Activated CD4-positive, alpha-beta memory T cell treated with anti-CD3 and anti-CD28 coated beads, Interleukin-2, amount 10 ng/mL, durations not matched to agents 7 days and 5 days (primary cell): ENCODE measurements at regions of chr1 and their contacts with region 1.

Region 1: GRCh38 chr1:110554871-110555801 is 36.2 kb upstream of the KCNA10 start:
- DNase-seq: peak; percentile 54
- H3K4me3 Mint-ChIP-seq: no peak overlapping the region
- H3K27ac Mint-ChIP-seq: no peak overlapping the region
- H3K4me1 Mint-ChIP-seq: peaks cover 12% of the 10 kb centered on the region
- H3K27me3 Mint-ChIP-seq: peaks cover 62% of the 10 kb centered on the region

Region 2: DNA sequence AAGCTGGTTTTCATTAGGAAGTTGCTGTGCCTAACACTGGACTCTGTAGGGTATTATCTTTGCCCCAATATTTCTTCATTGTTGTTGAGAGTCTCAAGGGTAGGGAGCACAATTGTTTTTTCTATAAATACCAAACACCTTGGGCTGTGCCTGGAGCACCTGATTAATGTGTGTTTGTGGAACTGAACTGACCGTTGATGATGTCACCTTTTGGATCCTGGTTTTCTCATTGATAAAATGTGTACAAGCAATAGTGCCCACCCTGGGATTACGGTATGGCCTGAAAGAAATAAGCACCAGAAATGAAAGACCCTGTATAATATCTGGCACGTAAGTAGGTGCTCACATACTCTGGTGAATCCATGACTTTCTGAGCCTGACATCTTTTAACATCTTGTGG is 11.7 kb after region 1 on chr1:
- CTCF ChIA-PET with region 1: interaction called, 17 read pairs
- POLR2A ChIA-PET with region 1: no interaction called
- DNase-seq: no peak
- H3K4me3 Mint-ChIP-seq: no peak overlapping the region
- H3K27ac Mint-ChIP-seq: no peak overlapping the region
- H3K4me1 Mint-ChIP-seq: no peaks in the 10 kb centered on the region
- H3K27me3 Mint-ChIP-seq: peaks cover 40% of the 10 kb centered on the region

Region 3: GRCh38 chr1:110572751-110573150 is 17.6 kb after region 1 on chr1:
- CTCF ChIA-PET with region 1: interaction called, 17 read pairs
- POLR2A ChIA-PET with region 1: no interaction called
- DNase-seq: no peak
- H3K4me3 Mint-ChIP-seq: no peak overlapping the region
- H3K27ac Mint-ChIP-seq: no peak overlapping the region
- H3K4me1 Mint-ChIP-seq: no peaks in the 10 kb centered on the region
- H3K27me3 Mint-ChIP-seq: peaks cover 48% of the 10 kb centered on the region

Region 4: DNA sequence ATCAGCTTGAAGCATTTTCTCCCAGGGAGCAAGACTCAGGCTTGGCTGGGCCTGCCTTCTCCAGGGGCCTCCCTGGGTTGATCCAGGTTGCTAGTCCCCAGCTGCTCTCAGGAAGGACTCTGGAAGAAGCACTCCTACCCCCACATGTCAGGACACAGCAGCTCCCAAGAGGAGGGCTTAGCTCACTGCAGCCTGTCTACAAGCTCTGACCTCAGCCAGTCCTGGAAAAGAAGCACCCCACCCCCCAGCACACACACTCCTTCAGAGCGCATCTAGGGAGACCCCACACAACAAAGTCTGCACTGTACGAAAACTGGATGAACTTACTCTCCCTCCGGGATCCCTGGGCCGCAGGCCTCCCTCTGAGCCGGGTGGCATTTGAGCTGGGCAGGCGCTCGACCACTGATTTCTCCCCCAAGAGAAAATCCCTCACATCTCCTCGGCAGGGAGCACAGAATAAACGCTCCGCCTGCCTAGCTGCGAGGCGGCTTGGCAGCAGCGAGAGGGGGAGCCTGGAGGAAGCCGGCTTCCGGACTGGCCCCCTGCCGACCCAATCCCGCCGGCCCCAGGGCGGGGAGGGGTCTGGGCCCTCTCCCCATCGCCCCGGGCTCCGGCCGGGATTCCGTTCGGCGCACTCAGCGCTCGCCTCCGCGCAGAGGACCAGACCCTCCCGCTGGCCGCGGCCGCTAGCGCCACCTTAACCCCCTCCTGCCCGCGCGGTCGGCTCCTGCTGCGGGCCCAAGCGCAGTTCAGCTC is 50.9 kb after region 1 on chr1 and contains the start of gene KCNA2:
- CTCF ChIA-PET with region 1: interaction called, 23 read pairs
- POLR2A ChIA-PET with region 1: no interaction called
- DNase-seq: peak; percentile 15
- H3K4me3 Mint-ChIP-seq: peak within 1 kb of the TSS; percentile 68
- H3K27ac Mint-ChIP-seq: no peak within 1 kb of the TSS
- H3K4me1 Mint-ChIP-seq: peaks cover 41% of the 10 kb centered on the region
- H3K27me3 Mint-ChIP-seq: peaks cover 43% of the 10 kb centered on the region
- total RNA-seq, gene KCNA2: 5.9 to 6.6 TPM

Region 5: DNA sequence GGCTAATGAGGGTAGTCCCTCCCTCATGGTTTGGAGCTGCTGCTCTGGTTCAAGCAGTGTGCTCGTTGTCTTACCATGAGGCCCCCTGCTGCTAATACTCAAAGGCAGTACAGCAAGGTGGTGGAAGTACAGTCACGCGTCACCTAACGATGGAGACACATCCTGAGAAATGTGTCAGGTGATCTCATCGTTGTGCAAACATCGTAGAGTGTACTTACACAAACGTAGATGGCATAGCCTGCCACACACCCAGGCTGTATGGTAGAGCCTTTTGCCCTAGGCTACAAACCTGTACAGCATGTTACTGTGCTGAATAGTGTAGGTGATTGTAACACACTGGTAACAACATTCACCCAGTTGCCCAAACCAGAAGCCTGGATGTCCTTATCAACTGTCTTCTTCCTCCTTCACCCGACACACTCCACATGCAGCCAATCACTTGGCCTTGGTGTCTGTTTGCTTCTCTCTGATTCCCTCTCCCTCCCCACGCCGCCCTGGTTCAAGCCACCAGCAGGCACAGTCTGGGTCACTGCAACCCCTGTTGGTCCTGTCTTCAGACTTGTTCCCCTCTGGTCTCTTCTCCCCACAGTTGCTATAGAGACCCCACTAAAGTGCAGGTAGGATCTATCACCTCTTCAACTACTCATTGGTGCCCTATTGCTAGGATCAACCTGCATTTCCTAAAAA is 57.1 kb after region 1 on chr1:
- CTCF ChIA-PET with region 1: interaction called, 23 read pairs
- POLR2A ChIA-PET with region 1: interaction called, 3 read pairs
- DNase-seq: peak; percentile 11
- H3K4me3 Mint-ChIP-seq: no peak overlapping the region
- H3K27ac Mint-ChIP-seq: no peak overlapping the region
- H3K4me1 Mint-ChIP-seq: peaks cover 58% of the 10 kb centered on the region
- H3K27me3 Mint-ChIP-seq: peaks cover 22% of the 10 kb centered on the region

Region 6: GRCh38 chr1:110663241-110663640 is 108.1 kb after region 1 on chr1:
- CTCF ChIA-PET with region 1: no interaction called
- POLR2A ChIA-PET with region 1: no interaction called
- DNase-seq: no peak
- H3K4me3 Mint-ChIP-seq: no peak overlapping the region
- H3K27ac Mint-ChIP-seq: no peak overlapping the region
- H3K4me1 Mint-ChIP-seq: peaks cover 29% of the 10 kb centered on the region
- H3K27me3 Mint-ChIP-seq: no peaks in the 10 kb centered on the region

Region 7: GRCh38 chr1:110798691-110799256 is 243.6 kb after region 1 on chr1:
- CTCF ChIA-PET with region 1: no interaction called
- POLR2A ChIA-PET with region 1: no interaction called
- DNase-seq: no peak
- H3K4me3 Mint-ChIP-seq: no peak overlapping the region
- H3K27ac Mint-ChIP-seq: no peak overlapping the region
- H3K4me1 Mint-ChIP-seq: no peaks in the 10 kb centered on the region
- H3K27me3 Mint-ChIP-seq: peaks cover 23% of the 10 kb centered on the region

Region 8: GRCh38 chr1:110840718-110841117 is 285.6 kb after region 1 on chr1:
- CTCF ChIA-PET with region 1: no interaction called
- POLR2A ChIA-PET with region 1: no interaction called
- DNase-seq: no peak
- H3K4me3 Mint-ChIP-seq: no peak overlapping the region
- H3K27ac Mint-ChIP-seq: no peak overlapping the region
- H3K4me1 Mint-ChIP-seq: no peaks in the 10 kb centered on the region
- H3K27me3 Mint-ChIP-seq: peaks cover 1% of the 10 kb centered on the region